Activated T-helper 2 cell treated with anti-CD3 and anti-CD28 coated beads, Interferon-gamma antibody, Interleukin-2, Interleukin-4, amounts not matched to agents 10 μg/mL and 5 μg/mL and 100 μg/mL, durations not matched to agents 14 hours and 24 hours and 36 hours (primary cell): ENCODE measurements at regions of chr12 and their contacts with region 1.

Region 1: GRCh38 chr12:126069549-126070165 is 1004.4 kb downstream of the AACS start:
- DNase-seq: peak; percentile 27
- H3K4me3 Mint-ChIP-seq: no peak overlapping the region
- H3K27ac Mint-ChIP-seq: no peak overlapping the region
- H3K4me1 Mint-ChIP-seq: no peaks in the 10 kb centered on the region
- H3K27me3 Mint-ChIP-seq: no peaks in the 10 kb centered on the region

Region 2: GRCh38 chr12:125882141-125882540 is 187.5 kb before region 1 on chr12:
- intact Hi-C with region 1: no loop called
- DNase-seq: no peak
- H3K4me3 Mint-ChIP-seq: no peak overlapping the region
- H3K27ac Mint-ChIP-seq: no peak overlapping the region
- H3K4me1 Mint-ChIP-seq: no peaks in the 10 kb centered on the region
- H3K27me3 Mint-ChIP-seq: no peaks in the 10 kb centered on the region

Region 3: GRCh38 chr12:126617312-126617711 is 547.7 kb after region 1 on chr12:
- intact Hi-C with region 1: loop called (anchors 5 kb)
- DNase-seq: no peak
- H3K4me3 Mint-ChIP-seq: no peak overlapping the region
- H3K27ac Mint-ChIP-seq: no peak overlapping the region
- H3K4me1 Mint-ChIP-seq: no peaks in the 10 kb centered on the region
- H3K27me3 Mint-ChIP-seq: no peaks in the 10 kb centered on the region

Region 4: GRCh38 chr12:126747530-126748149 is 678.0 kb after region 1 on chr12:
- intact Hi-C with region 1: loop called (anchors 10 kb)
- DNase-seq: peak; percentile 23
- H3K4me3 Mint-ChIP-seq: no peak overlapping the region
- H3K27ac Mint-ChIP-seq: no peak overlapping the region
- H3K4me1 Mint-ChIP-seq: no peaks in the 10 kb centered on the region
- H3K27me3 Mint-ChIP-seq: no peaks in the 10 kb centered on the region

Region 5: GRCh38 chr12:126874427-126875026 is 804.9 kb after region 1 on chr12:
- intact Hi-C with region 1: loop called (anchors 2 kb)
- DNase-seq: peak; percentile 30
- H3K4me3 Mint-ChIP-seq: no peak overlapping the region
- H3K27ac Mint-ChIP-seq: no peak overlapping the region
- H3K4me1 Mint-ChIP-seq: no peaks in the 10 kb centered on the region
- H3K27me3 Mint-ChIP-seq: no peaks in the 10 kb centered on the region

Region 6: GRCh38 chr12:127640181-127640886 is 1570.7 kb after region 1 on chr12:
- intact Hi-C with region 1: no loop called
- DNase-seq: no peak
- H3K4me3 Mint-ChIP-seq: no peak overlapping the region
- H3K27ac Mint-ChIP-seq: no peak overlapping the region
- H3K4me1 Mint-ChIP-seq: no peaks in the 10 kb centered on the region
- H3K27me3 Mint-ChIP-seq: no peaks in the 10 kb centered on the region